T-cell (primary cell): ENCODE measurements at regions of chr20 and their contacts with region 1.

Region 1: GRCh38 chr20:35718972-35719635 is 19.9 kb downstream of the ROMO1 start:
- DNase-seq: no peak
- ATAC-seq: peak in 1 of 4 experiments; percentile 4
- H3K4me3 ChIP-seq: no peak overlapping the region
- H3K4me3 Mint-ChIP-seq: no peak overlapping the region
- H3K27ac ChIP-seq: no peak overlapping the region
- H3K27ac Mint-ChIP-seq: no peak overlapping the region
- H3K4me1 ChIP-seq: peaks cover 0 to 46% of the 10 kb centered on the region in 2 experiments
- H3K4me1 Mint-ChIP-seq: peaks cover 50 to 60% (median 59%) of the 10 kb centered on the region in 3 donors
- H3K27me3 ChIP-seq: no peaks in the 10 kb centered on the region
- H3K27me3 Mint-ChIP-seq: no peaks in the 10 kb centered on the region

Region 2: DNA sequence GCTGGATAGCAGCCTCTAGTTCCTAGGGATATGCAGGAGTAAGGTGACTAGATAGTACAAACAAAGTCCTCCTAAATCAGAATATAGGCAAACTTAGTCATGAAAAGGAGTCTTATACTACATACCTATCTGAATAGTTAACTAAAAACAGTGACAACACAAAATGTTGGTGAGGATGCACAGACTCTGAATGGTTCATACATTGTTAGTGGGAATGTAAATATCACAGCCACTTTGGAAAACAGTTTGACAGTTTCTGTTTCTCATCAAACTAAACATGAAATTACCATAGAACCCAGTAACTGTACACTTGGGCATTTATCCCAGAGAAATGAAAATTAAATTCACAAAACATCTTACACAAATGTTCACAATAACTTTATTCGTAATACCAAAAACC is 37.1 kb before region 1 on chr20:
- CTCF ChIA-PET with region 1: no interaction called
- POLR2A ChIA-PET with region 1: no interaction called
- DNase-seq: no peak
- ATAC-seq: no peak
- H3K4me3 ChIP-seq: no peak overlapping the region
- H3K4me3 Mint-ChIP-seq: no peak overlapping the region
- H3K27ac ChIP-seq: no peak overlapping the region
- H3K27ac Mint-ChIP-seq: no peak overlapping the region
- H3K4me1 ChIP-seq: peaks cover 0 to 2% of the 10 kb centered on the region in 2 experiments
- H3K4me1 Mint-ChIP-seq: peaks cover 0 to 2% (median 0%) of the 10 kb centered on the region in 3 donors
- H3K27me3 ChIP-seq: no peaks in the 10 kb centered on the region
- H3K27me3 Mint-ChIP-seq: no peaks in the 10 kb centered on the region

Region 3: DNA sequence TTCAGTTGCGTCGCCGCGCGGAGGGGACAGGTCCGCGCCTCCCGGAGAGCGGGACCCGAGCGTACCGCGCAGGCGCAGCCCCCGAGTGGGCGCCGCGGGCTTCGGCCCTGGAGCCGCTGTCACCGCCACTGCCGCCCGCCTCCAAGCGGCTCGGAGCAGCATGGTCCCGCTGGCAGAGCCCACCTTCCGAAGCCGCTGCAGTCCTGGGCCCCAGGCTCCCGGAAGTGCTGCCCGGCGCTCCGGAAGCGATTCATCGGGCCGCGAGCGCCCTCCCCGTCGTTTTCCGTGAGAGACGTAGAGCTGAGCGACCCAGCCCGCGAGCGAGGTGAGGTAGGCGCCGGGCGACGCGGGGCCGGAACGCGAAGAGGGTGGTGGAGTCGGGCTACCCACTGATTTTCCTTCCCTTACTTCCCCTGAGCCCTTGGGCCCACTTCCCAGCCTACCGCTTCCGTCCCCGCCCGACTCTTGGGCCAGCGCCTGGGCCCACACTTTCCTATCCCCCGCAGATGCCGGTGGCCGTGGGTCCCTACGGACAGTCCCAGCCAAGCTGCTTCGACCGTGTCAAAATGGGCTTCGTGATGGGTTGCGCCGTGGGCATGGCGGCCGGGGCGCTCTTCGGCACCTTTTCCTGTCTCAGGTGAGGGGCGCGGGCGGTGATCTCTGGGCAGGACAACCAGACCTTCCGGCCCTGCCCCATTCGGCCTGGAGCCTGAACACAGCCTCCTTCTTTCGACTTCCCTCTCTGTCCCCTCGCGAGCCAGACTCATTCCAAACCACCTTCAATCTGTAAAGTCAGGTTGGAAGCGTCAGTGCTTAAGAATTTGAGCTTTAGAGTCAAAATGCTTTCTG is 19.8 kb before region 1 on chr20 and contains the starts of genes NFS1 and ROMO1:
- CTCF ChIA-PET with region 1: interaction called in 1 of 2 experiments, 4 read pairs
- POLR2A ChIA-PET with region 1: interaction called, 6 to 10 read pairs
- DNase-seq: peak; percentile 59 to 93 (median 85)
- ATAC-seq: peak; percentile 86 to 95 (median 92)
- H3K4me3 ChIP-seq: peak within 1 kb of the TSS; percentile 66 to 94
- H3K4me3 Mint-ChIP-seq: peak within 1 kb of the TSS; percentile 87 to 100 (median 89)
- H3K27ac ChIP-seq: peak within 1 kb of the TSS; percentile 87
- H3K27ac Mint-ChIP-seq: peak within 1 kb of the TSS; percentile 89 to 93
- H3K4me1 ChIP-seq: peaks cover 16 to 19% of the 10 kb centered on the region in 2 experiments
- H3K4me1 Mint-ChIP-seq: peaks cover 47 to 60% (median 57%) of the 10 kb centered on the region in 3 donors
- H3K27me3 ChIP-seq: no peaks in the 10 kb centered on the region
- H3K27me3 Mint-ChIP-seq: no peaks in the 10 kb centered on the region
- total RNA-seq, gene NFS1: 17.7 to 33.5 (median 31.2) TPM
- total RNA-seq, gene ROMO1: 38.4 to 79.7 (median 62.5) TPM

Region 4: GRCh38 chr20:35729836-35730582 is 10.9 kb after region 1 on chr20:
- CTCF ChIA-PET with region 1: no interaction called
- POLR2A ChIA-PET with region 1: interaction called, 8 to 25 read pairs
- DNase-seq: no peak
- ATAC-seq: no peak
- H3K4me3 ChIP-seq: no peak overlapping the region
- H3K4me3 Mint-ChIP-seq: peak overlapping the region in 2 of 3 donors; percentile 4 to 31
- H3K27ac ChIP-seq: no peak overlapping the region
- H3K27ac Mint-ChIP-seq: no peak overlapping the region
- H3K4me1 ChIP-seq: peaks cover 14 to 22% of the 10 kb centered on the region in 2 experiments
- H3K4me1 Mint-ChIP-seq: peaks cover 58 to 63% (median 62%) of the 10 kb centered on the region in 3 donors
- H3K27me3 ChIP-seq: no peaks in the 10 kb centered on the region
- H3K27me3 Mint-ChIP-seq: no peaks in the 10 kb centered on the region

Region 5: DNA sequence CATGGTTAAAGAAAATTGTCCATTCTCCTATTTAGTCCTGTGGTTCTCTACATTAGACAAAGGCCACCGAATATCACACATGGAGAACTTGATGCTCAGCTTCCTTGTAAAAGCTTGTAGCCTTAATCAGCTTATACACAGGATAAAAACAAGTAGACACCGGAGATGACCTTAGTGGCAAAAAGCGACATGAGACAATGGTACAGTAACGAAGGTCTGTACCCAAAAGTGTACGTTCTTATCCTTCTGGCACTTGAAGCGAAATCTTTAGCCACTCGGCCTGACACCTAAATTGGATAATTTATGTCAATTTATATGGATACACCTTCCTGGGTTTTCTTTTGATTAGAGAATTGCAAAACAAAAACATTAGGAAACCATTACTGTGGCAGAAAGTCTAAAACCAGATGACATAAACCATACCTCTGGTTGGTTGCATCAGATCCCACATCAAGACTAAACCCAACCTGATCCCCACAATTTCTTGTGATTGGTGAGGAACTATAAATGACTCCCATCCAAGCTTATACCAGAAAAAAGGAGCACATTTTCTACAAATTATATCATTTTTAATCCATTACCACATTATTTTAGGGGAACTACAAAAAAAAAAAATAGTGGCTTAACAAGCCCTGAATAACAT is 16.8 kb after region 1 on chr20:
- CTCF ChIA-PET with region 1: interaction called, 3 to 6 read pairs
- POLR2A ChIA-PET with region 1: interaction called, 6 to 25 read pairs
- DNase-seq: no peak
- ATAC-seq: no peak
- H3K4me3 ChIP-seq: no peak overlapping the region
- H3K4me3 Mint-ChIP-seq: peak overlapping the region; percentile 50 to 94 (median 54)
- H3K27ac ChIP-seq: peak overlapping the region; percentile 17
- H3K27ac Mint-ChIP-seq: peak overlapping the region in 1 of 2 donors; percentile 2
- H3K4me1 ChIP-seq: peaks cover 48 to 63% of the 10 kb centered on the region in 2 experiments
- H3K4me1 Mint-ChIP-seq: peaks cover 80 to 84% (median 82%) of the 10 kb centered on the region in 3 donors
- H3K27me3 ChIP-seq: no peaks in the 10 kb centered on the region
- H3K27me3 Mint-ChIP-seq: no peaks in the 10 kb centered on the region

Region 6: GRCh38 chr20:35757098-35757705 is 38.1 kb after region 1 on chr20:
- CTCF ChIA-PET with region 1: no interaction called
- POLR2A ChIA-PET with region 1: no interaction called
- DNase-seq: no peak
- ATAC-seq: peak in 1 of 4 experiments; percentile 40
- H3K4me3 ChIP-seq: no peak overlapping the region
- H3K4me3 Mint-ChIP-seq: no peak overlapping the region
- H3K27ac ChIP-seq: no peak overlapping the region
- H3K27ac Mint-ChIP-seq: no peak overlapping the region
- H3K4me1 ChIP-seq: no peaks in the 10 kb centered on the region
- H3K4me1 Mint-ChIP-seq: peaks cover 3 to 7% (median 6%) of the 10 kb centered on the region in 3 donors
- H3K27me3 ChIP-seq: no peaks in the 10 kb centered on the region
- H3K27me3 Mint-ChIP-seq: no peaks in the 10 kb centered on the region

Region 7: DNA sequence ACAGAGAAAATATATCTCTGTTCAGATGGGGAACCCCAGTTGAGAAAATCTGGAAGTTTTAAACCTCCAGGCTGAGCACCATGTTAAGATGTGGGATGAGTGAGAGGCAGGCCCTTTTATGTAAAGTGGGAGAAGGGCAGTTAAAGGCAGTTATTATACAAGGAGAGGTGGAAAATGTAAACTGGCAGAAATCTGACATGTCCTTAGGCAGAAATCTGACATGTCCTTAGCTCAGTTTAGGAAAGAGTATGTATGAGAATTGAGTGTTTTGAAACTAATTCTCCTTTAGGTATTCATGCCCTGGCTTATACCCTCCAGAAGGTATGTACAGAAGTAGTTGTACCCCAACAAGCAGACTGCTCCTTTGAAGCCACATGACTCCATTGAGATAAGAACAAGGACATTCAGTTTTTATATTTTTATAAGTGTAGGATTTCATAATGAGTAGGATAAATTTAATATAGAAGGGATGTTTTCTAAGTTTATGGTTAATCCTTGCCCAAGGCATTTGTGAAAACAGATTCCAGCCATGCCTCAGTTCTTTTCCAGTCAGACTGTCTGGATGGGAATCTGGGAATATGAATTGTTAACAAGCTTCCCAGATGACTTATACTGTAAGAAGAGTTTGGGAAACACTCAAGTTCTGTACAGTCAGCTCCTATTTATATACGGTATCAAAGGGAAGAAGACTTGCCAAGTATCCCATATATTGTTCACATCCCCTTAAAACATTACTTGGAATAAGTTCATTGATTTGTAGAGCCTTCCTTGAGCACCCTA is 147.5 kb after region 1 on chr20:
- CTCF ChIA-PET with region 1: no interaction called
- POLR2A ChIA-PET with region 1: no interaction called
- DNase-seq: no peak
- ATAC-seq: no peak
- H3K4me3 ChIP-seq: no peak overlapping the region
- H3K4me3 Mint-ChIP-seq: no peak overlapping the region
- H3K27ac ChIP-seq: no peak overlapping the region
- H3K27ac Mint-ChIP-seq: peak overlapping the region; percentile 5 to 64
- H3K4me1 ChIP-seq: no peaks in the 10 kb centered on the region
- H3K4me1 Mint-ChIP-seq: peaks cover 0 to 7% (median 5%) of the 10 kb centered on the region in 3 donors
- H3K27me3 ChIP-seq: no peaks in the 10 kb centered on the region
- H3K27me3 Mint-ChIP-seq: no peaks in the 10 kb centered on the region